Gastrocnemius medialis (tissue), 4 donors: ENCODE measurements at regions of chr10 and their contacts with region 1.

Region 1: GRCh38 chr10:93672022-93672678 is 30.2 kb downstream of the FRA10AC1 start:
- DNase-seq: no peak
- ATAC-seq: no peak
- H3K4me3 ChIP-seq: no peak overlapping the region
- H3K27ac ChIP-seq: no peak overlapping the region
- H3K4me1 ChIP-seq: no peaks in the 10 kb centered on the region
- H3K27me3 ChIP-seq: no peaks in the 10 kb centered on the region
- CTCF ChIP-seq: no peak
- POLR2A ChIP-seq: no peak

Region 2: DNA sequence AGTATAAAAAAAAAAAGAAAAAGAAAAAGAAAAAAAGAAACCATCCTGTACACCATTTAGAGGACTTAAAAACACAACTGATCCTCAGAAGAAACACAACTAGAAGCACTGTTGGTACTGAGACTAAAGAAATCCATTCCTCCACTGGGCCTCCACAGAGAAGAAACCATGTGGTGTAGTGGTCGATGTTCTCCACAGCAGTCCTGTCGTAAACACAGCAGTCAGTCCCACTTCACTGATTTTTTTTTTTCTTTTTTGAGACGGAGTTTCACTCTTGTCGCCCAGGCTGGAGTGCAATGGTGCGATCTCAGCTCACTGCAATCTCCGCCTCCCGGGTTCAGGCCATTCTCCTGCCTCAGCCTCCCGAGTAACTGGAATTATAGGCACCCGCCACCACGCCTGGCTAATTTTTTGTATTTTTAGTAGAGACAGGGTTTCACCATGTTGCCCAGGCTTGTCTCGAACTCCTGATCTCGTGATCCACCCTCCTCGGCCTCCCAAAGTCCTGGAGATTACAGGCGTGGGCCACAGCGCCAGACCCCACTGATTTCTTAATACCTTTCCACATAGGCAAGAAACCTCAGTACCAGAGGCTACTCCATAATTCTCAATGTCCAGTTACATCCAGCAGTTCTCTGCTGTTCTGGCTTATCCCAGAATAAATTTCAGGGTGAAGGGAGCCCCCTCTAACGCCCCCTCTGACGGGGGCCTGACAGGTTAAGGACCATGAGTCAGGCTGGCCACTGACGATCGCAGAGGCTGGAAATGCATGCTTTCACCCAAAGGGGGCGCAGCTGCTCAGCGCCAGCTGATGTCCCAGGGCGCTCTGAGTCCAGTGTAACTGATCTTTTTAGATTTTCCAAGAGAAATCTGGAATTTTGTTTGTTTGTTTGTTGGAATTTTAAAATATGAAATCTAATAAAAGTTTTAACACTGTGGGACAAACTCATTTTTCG is 130.5 kb before region 1 on chr10:
- in situ Hi-C with region 1: loop called in 1 of 4 experiments (anchors 10 kb)
- intact Hi-C with region 1: no loop called
- DNase-seq: peak in 1 of 2 donors; percentile 22
- ATAC-seq: peak; percentile 74 to 82
- H3K4me3 ChIP-seq: peak overlapping the region in 2 of 4 donors; percentile 17 to 40
- H3K27ac ChIP-seq: no peak overlapping the region
- H3K4me1 ChIP-seq: no peaks in the 10 kb centered on the region
- H3K27me3 ChIP-seq: no peaks in the 10 kb centered on the region
- CTCF ChIP-seq: peak; percentile 23 to 65 (median 37)
- POLR2A ChIP-seq: no peak

Region 3: DNA sequence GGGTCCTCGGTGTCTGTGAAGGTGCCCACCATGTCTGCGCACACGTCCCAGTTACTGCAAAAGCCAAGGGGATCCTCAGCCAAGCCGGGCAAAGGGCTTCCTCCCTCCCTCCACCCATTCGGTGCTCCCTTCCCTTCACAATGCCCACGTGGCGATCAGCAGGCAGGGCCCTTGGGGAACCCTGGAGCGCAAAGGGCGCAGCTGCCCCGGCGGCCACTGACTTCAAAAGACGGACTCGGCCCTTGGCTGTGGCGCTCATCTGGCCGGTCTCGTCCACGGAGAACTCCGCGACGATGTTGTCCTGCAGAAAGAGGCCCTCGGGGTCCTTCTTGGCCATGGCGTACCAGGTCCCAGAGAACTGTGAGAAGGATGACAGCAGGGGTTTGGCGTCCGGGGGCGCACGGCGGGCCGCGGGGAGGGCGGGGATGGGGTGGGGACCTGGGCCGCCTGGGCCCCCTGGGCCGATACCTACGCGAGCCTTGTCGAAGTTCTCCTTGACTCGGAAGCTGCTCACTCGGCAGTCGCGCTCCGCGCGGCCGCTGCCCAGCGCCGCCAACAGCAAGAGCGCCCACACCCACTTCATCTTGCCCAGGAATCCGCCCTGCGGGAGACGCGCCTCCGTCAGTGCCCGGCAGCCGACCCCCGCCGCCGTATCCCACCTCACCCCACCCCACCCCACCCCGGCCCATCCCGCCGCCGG is 71.6 kb before region 1 on chr10:
- in situ Hi-C with region 1: no loop called
- intact Hi-C with region 1: no loop called
- DNase-seq: no peak
- ATAC-seq: peak in 1 of 2 donors; percentile 23
- H3K4me3 ChIP-seq: peak overlapping the region; percentile 16 to 40 (median 26)
- H3K27ac ChIP-seq: no peak overlapping the region
- H3K4me1 ChIP-seq: peaks cover 0 to 9% of the 10 kb centered on the region in 2 donors
- H3K27me3 ChIP-seq: peaks cover 25 to 33% (median 27%) of the 10 kb centered on the region in 3 donors
- CTCF ChIP-seq: no peak
- POLR2A ChIP-seq: no peak